KBM-7 (cell line): ENCODE measurements at regions of chr12 and their contacts with region 1.

Region 1: GRCh38 chr12:22083167-22083566 is 37.1 kb downstream of the CMAS start:
- DNase-seq: peak; percentile 40

Region 2: GRCh38 chr12:22190969-22191368 is 107.8 kb after region 1 on chr12:
- in situ Hi-C with region 1: no loop called
- DNase-seq: no peak

Region 3: GRCh38 chr12:22334410-22335290 is 251.5 kb after region 1 on chr12 and contains the start of gene ST8SIA1:
- in situ Hi-C with region 1: loop called (anchors 25 kb)
- DNase-seq: no peak

Region 4: GRCh38 chr12:22443379-22444316 is 360.5 kb after region 1 on chr12:
- in situ Hi-C with region 1: loop called (anchors 25 kb)
- DNase-seq: peak; percentile 76